ENCODE measurements at regions of chr14 and their contacts with region 1.

Region 1: DNA sequence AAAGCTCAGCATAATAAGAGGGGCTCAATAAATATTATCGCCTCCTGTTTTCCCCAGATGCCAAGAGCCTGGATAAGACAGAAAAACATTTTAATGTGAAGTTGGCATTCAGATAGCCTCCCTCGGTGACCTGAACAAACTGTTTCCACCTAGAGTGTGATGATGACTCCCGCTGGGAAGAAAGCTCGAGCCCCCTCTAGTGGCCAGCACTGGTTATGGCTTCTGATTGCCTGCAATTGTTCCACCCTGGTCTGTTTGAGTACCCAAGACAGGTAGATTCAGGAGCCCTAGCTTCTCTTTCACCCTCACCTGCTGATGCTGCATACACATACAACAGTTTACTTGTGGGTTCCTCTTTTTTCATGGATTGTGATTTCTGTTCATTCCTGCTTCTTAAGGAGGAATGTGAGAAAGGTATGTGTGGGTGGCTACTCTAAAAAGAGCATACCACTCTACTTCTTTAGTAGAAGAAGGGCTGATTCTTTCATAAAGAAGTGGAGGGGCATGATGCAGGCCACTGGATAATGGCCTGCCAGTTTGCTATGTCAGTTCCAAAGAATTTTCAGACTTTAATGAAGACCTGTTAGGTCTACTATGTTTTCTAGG is 6.4 kb downstream of the ERG28 start:
- DNase-seq: peak; percentile 72
- ATAC-seq: peak; percentile 96
- H3K4me3 Mint-ChIP-seq: no peak overlapping the region
- H3K27ac Mint-ChIP-seq: no peak overlapping the region
- H3K4me1 Mint-ChIP-seq: peaks cover 1% of the 10 kb centered on the region
- H3K27me3 Mint-ChIP-seq: no peaks in the 10 kb centered on the region
- CTCF ChIP-seq: peak; percentile 87

Region 2: GRCh38 chr14:75126679-75127473 is 527.4 kb before region 1 on chr14 and contains the start of gene NEK9:
- CTCF ChIA-PET with region 1: interaction called, 9 read pairs
- POLR2A ChIA-PET with region 1: interaction called, 3 read pairs
- intact Hi-C with region 1: loop called (anchors 1 kb)
- DNase-seq: peak; percentile 86
- ATAC-seq: peak; percentile 88
- H3K4me3 Mint-ChIP-seq: peak within 1 kb of the TSS; percentile 96
- H3K27ac Mint-ChIP-seq: peak within 1 kb of the TSS; percentile 94
- H3K4me1 Mint-ChIP-seq: peaks cover 38% of the 10 kb centered on the region
- H3K27me3 Mint-ChIP-seq: no peaks in the 10 kb centered on the region
- CTCF ChIP-seq: no peak
- total RNA-seq, gene NEK9: 96.1 and 97.7 TPM in 2 replicates

Region 3: DNA sequence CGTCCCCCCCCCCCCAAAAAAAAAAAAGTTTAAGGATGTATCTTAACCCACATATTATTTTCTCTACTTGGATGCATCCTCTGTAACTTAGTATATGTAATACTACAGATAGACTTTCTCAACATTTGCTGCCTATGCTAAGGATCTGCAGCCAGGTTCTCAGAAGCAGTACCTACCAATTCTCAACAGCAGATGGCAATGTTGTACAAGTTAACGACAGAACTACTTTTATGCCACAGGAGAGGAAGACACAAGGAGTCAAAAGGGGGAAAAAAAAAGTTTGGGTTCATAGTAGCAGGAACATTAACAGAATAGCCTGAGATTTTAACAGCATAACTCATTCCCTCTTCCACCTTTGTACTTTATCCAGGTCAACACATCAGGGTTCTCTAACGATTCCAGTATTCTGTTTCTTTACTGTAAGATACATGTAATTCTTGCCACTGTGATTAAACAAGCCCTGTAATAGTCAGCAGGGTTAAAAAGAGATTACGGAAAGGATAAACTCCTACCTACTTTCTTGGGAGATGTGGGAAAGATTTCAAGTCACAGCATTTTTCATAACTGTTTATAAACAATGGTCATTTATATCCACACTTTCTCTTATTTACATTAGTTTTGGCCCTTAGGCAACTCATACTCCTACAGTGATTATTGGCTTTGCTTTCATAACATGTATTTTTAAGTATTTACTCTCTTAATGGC is 521.7 kb before region 1 on chr14:
- CTCF ChIA-PET with region 1: interaction called, 9 read pairs
- POLR2A ChIA-PET with region 1: interaction called, 3 read pairs
- intact Hi-C with region 1: loop called (anchors 1 kb)
- DNase-seq: no peak
- ATAC-seq: peak; percentile 87
- H3K4me3 Mint-ChIP-seq: no peak overlapping the region
- H3K27ac Mint-ChIP-seq: no peak overlapping the region
- H3K4me1 Mint-ChIP-seq: peaks cover 16% of the 10 kb centered on the region
- H3K27me3 Mint-ChIP-seq: no peaks in the 10 kb centered on the region
- CTCF ChIP-seq: peak; percentile 51

Region 4: DNA sequence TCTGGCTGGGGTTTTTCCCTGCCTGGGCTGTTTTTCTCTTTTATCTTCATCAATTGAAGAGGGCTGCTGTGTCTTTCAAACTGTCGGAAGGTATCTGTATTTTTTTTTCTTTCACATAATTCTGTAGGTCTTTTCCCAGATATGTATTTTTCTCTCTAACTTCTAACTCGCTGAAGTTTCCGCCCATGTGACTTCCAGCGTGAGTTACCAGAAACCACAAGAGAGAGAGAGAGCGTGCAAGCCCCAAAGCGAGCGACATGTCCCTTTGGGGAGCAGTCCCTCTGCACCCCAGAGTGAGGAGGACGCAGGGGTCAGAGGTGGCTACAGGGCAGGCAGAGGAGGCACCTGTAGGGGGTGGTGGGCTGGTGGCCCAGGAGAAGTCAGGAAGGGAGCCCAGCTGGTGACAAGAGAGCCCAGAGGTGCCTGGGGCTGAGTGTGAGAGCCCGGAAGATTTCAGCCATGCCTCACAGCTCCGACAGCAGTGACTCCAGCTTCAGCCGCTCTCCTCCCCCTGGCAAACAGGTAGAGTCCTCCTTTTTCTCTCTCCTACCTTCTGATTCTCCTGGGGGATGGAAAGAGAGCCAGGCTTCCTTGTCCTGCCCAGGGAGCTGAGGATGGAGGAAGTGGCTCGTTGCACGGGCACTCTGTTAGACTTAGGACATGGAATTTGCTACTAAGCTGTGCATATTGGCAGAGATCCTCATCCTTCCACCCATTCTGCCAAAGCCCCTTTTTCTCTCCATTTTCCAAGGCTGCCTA is 131.8 kb before region 1 on chr14 and contains the start of gene BATF:
- CTCF ChIA-PET with region 1: interaction called, 5 read pairs
- POLR2A ChIA-PET with region 1: interaction called, 4 read pairs
- intact Hi-C with region 1: loop called (anchors 5 kb)
- DNase-seq: peak; percentile 58
- ATAC-seq: peak; percentile 70
- H3K4me3 Mint-ChIP-seq: peak within 1 kb of the TSS; percentile 100
- H3K27ac Mint-ChIP-seq: peak within 1 kb of the TSS; percentile 98
- H3K4me1 Mint-ChIP-seq: peaks cover 85% of the 10 kb centered on the region
- H3K27me3 Mint-ChIP-seq: no peaks in the 10 kb centered on the region
- CTCF ChIP-seq: no peak
- total RNA-seq, gene BATF: 160 and 171 TPM in 2 replicates

Region 5: DNA sequence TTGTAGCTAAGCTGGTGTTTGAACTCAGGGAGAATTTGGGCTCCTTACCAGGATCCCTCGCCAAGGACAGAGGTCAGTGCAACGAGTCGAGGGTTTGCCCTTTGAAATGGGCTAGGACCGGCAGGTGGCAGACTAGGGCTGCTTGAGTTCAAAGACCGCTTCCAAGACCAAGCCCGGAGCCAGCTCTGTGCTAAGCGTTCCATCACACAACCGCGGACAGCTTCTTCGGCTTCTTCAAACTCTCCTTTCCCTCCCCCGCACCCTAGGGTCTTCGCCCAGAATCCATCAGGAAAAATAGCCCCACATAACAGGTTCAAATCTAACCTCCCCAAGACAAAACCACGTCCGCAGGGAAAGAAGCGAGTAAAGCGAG is 76.5 kb before region 1 on chr14:
- CTCF ChIA-PET with region 1: interaction called, 264 read pairs
- POLR2A ChIA-PET with region 1: interaction called, 12 read pairs
- intact Hi-C with region 1: loop called (anchors 1 kb)
- DNase-seq: peak; percentile 60
- ATAC-seq: peak; percentile 85
- H3K4me3 Mint-ChIP-seq: peak overlapping the region; percentile 89
- H3K27ac Mint-ChIP-seq: peak overlapping the region; percentile 72
- H3K4me1 Mint-ChIP-seq: peaks cover 29% of the 10 kb centered on the region
- H3K27me3 Mint-ChIP-seq: peaks cover 3% of the 10 kb centered on the region
- CTCF ChIP-seq: peak; percentile 36

Measured in activated B cell treated with CpG ODN at 0.5 μM for 24 hours (primary cell).